Activated naive CD4-positive, alpha-beta T cell treated with anti-CD3 and anti-CD28 coated beads for 36 hours (primary cell): ENCODE measurements at regions of chr11 and their contacts with region 1.

Region 1: DNA sequence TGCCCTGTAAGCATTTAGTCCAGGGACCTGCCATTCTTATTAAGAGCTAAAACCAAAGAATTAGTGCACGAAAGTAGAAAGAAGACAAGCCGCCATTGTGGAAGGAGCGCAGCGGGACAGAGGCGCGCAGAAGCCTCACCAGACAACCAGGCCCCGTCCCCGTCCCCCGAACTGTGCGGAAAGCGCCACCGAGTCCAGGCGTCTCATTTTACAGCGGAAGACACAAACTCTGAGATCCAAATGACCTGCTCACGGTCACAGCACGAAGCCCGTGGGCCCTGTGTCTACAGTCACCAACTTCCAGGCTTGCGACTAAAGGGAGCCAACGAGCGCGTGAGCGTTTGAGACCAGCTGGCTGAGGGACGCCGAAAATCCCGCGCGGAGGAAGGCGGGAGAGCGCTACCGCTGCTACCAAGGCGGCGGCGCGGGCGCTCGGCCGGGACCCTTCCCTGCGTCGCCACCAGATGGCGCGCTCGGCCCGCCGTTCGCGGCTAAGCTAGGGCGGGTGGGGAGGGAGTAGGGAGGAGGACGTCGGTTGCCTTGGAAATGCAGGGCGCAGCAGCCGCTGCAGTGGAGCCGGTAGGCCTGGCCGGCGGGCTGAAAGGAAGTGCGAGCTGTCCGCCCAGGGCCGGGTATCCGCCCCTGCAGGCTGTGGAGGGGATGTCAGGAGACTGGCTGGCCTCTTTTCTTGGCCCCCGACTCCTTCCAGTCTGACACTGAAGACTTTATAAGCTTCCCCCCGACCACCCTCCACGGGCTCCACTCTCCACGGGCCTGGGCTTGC is 434 bp upstream of the CCDC83 start:
- DNase-seq: peak; percentile 92
- H3K4me3 Mint-ChIP-seq: peak overlapping the region; percentile 88
- H3K27ac Mint-ChIP-seq: peak overlapping the region; percentile 89
- H3K4me1 Mint-ChIP-seq: peaks cover 7% of the 10 kb centered on the region
- H3K27me3 Mint-ChIP-seq: no peaks in the 10 kb centered on the region

Region 2: GRCh38 chr11:85664615-85665481 is 189.9 kb before region 1 on chr11 and contains the start of gene CREBZF:
- CTCF ChIA-PET with region 1: interaction called, 4 read pairs
- intact Hi-C with region 1: loop called (anchors 1 kb)
- DNase-seq: peak; percentile 98
- H3K4me3 Mint-ChIP-seq: peak within 1 kb of the TSS; percentile 98
- H3K27ac Mint-ChIP-seq: peak within 1 kb of the TSS; percentile 96
- H3K4me1 Mint-ChIP-seq: peaks cover 23% of the 10 kb centered on the region
- H3K27me3 Mint-ChIP-seq: no peaks in the 10 kb centered on the region
- total RNA-seq, gene CREBZF: 53.3 to 53.9 TPM

Region 3: DNA sequence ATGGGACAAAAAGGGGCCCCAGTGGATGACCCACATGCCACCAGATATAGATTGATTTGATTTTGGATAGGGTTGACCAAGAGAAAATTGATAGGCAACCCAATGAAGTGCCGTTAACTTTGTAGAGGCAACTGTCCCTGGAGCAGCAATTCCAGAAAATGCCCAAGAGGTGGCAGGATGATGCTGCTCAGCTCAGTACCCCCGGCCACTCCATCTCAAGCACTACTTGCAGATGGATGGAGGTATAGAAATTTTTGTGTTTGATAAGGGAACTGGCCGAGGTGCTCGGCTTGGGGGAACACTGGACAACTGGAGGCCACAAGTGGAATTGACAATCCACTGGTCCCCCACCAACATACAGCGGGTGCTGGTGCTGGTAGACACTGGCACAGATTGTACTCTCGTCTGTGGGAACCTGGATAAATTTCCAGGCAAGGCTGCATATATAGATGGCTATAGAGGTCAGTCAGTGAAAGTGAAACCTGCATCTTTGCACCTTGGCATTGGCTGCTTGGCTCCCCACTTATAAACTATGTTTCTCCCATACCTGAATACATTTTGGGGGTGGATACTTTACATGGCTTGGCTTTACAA is 86.7 kb after region 1 on chr11:
- CTCF ChIA-PET with region 1: no interaction called
- intact Hi-C with region 1: loop called (anchors 1 kb)
- DNase-seq: peak; percentile 76
- H3K4me3 Mint-ChIP-seq: no peak overlapping the region
- H3K27ac Mint-ChIP-seq: no peak overlapping the region
- H3K4me1 Mint-ChIP-seq: peaks cover 18% of the 10 kb centered on the region
- H3K27me3 Mint-ChIP-seq: no peaks in the 10 kb centered on the region

Region 4: DNA sequence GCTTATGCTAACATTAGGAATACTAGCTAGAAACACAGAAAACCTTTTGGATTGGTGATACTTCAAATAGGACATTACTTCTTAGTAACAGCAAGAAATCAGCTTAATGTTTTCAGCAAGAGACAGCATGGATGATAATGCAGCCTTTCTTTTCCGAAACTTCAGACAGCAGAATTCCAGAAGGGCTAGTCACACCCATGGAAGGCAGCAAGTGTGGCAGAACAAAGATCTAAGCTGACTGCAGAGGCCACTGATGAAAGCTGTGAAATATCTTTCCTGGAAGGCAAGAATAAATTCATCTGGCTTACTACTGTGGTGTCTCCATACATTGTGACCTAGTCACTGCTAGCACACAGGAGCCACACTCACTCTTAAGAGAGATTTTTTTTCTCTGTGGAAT is 100.8 kb after region 1 on chr11:
- CTCF ChIA-PET with region 1: no interaction called
- intact Hi-C with region 1: no loop called
- DNase-seq: no peak
- H3K4me3 Mint-ChIP-seq: no peak overlapping the region
- H3K27ac Mint-ChIP-seq: no peak overlapping the region
- H3K4me1 Mint-ChIP-seq: peaks cover under 1% of the 10 kb centered on the region
- H3K27me3 Mint-ChIP-seq: no peaks in the 10 kb centered on the region

Region 5: GRCh38 chr11:86182976-86183584 is 328.3 kb after region 1 on chr11:
- CTCF ChIA-PET with region 1: no interaction called
- intact Hi-C with region 1: no loop called
- DNase-seq: peak; percentile 68
- H3K4me3 Mint-ChIP-seq: no peak overlapping the region
- H3K27ac Mint-ChIP-seq: no peak overlapping the region
- H3K4me1 Mint-ChIP-seq: peaks cover 3% of the 10 kb centered on the region
- H3K27me3 Mint-ChIP-seq: no peaks in the 10 kb centered on the region

Region 6: DNA sequence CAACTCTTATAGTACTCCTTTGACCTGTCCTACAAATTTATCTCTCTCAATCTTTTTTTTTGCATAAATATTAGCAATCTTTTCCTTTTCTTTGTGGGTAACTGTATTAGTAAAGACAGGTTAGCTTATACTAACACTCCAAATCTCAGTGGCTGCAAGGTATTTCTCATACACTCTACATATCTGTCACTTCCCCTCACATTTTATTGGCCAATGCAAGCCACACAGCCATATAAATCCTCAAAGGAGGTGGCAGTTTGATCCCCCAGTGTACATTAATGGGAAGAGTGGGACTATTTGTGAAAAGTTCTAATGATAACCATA is 347.2 kb after region 1 on chr11:
- CTCF ChIA-PET with region 1: interaction called, 5 read pairs
- intact Hi-C with region 1: loop called (anchors 1 kb)
- DNase-seq: peak; percentile 42
- H3K4me3 Mint-ChIP-seq: no peak overlapping the region
- H3K27ac Mint-ChIP-seq: no peak overlapping the region
- H3K4me1 Mint-ChIP-seq: no peaks in the 10 kb centered on the region
- H3K27me3 Mint-ChIP-seq: no peaks in the 10 kb centered on the region

Region 7: DNA sequence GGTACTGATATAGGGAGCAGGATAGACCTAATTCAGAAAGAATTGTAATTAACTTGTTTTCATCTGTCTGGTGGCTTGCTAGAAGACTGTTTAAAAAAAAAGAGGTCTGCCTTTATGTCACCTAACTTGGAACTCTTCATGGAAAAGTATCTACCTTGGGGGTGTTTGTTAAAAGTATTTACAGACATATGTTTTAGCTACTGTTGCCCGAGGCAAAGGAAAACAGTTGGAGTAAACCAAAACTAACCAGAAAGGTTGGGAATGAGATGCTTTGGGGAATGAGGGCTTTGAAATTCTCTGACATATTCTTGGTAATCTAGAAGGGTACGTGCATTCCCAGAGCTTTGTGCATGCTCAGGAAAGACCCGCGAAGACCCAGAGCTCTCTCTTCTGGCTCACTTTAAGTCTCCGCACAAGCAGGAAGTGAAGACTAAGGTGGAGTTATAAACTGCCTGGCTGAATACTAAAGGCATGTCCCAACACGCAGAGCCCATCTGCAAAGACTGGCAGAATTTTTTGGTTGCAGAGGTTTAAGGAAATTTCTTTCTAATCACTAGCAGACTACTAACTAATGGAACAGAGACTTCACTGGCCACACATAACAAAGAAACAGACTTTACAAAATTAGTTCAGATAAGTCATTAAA is 480.5 kb after region 1 on chr11:
- CTCF ChIA-PET with region 1: no interaction called
- intact Hi-C with region 1: no loop called
- DNase-seq: no peak
- H3K4me3 Mint-ChIP-seq: no peak overlapping the region
- H3K27ac Mint-ChIP-seq: peak overlapping the region; percentile 25
- H3K4me1 Mint-ChIP-seq: no peaks in the 10 kb centered on the region
- H3K27me3 Mint-ChIP-seq: no peaks in the 10 kb centered on the region

Region 8: GRCh38 chr11:86456052-86456939 is 601.5 kb after region 1 on chr11:
- CTCF ChIA-PET with region 1: interaction called, 9 read pairs
- intact Hi-C with region 1: loop called (anchors 2 kb)
- DNase-seq: peak; percentile 95
- H3K4me3 Mint-ChIP-seq: no peak overlapping the region
- H3K27ac Mint-ChIP-seq: no peak overlapping the region
- H3K4me1 Mint-ChIP-seq: peaks cover 8% of the 10 kb centered on the region
- H3K27me3 Mint-ChIP-seq: no peaks in the 10 kb centered on the region

Region 9: GRCh38 chr11:86473991-86474833 is 619.5 kb after region 1 on chr11:
- CTCF ChIA-PET with region 1: no interaction called
- intact Hi-C with region 1: no loop called
- DNase-seq: no peak
- H3K4me3 Mint-ChIP-seq: no peak overlapping the region
- H3K27ac Mint-ChIP-seq: no peak overlapping the region
- H3K4me1 Mint-ChIP-seq: peaks cover 8% of the 10 kb centered on the region
- H3K27me3 Mint-ChIP-seq: peaks cover 3% of the 10 kb centered on the region

Region 10: GRCh38 chr11:86802601-86803051 is 947.9 kb after region 1 on chr11:
- CTCF ChIA-PET with region 1: no interaction called
- intact Hi-C with region 1: loop called (anchors 2 kb)
- DNase-seq: peak; percentile 38
- H3K4me3 Mint-ChIP-seq: no peak overlapping the region
- H3K27ac Mint-ChIP-seq: no peak overlapping the region
- H3K4me1 Mint-ChIP-seq: peaks cover 53% of the 10 kb centered on the region
- H3K27me3 Mint-ChIP-seq: peaks cover 46% of the 10 kb centered on the region